H1 (cell line): ENCODE measurements at regions of chr12 and their contacts with region 1.

Region 1: GRCh38 chr12:111841750-111842555 is at the start of gene MAPKAPK5:
- DNase-seq: peak; percentile 86 to 98
- H3K4me3 ChIP-seq: peak within 1 kb of the TSS; percentile 75 to 94 (median 86)
- H3K27ac ChIP-seq: peak within 1 kb of the TSS; percentile 99
- H3K4me1 ChIP-seq: no peaks in the 10 kb centered on the region; a peak in 2 of 7 replicates
- H3K27me3 ChIP-seq: no peaks in the 10 kb centered on the region
- CTCF ChIP-seq: no peak
- EP300 ChIP-seq: peak in 1 of 2 experiments; percentile 38; a peak in 1 of 3 replicates
- POLR2A ChIP-seq: peak; percentile 79 to 82
- RAD21 ChIP-seq: no peak
- total RNA-seq, gene MAPKAPK5: 90.8 and 91.5 TPM in 2 replicates

Region 2: GRCh38 chr12:111424793-111425251 is 417.1 kb before region 1 on chr12:
- CTCF ChIA-PET with region 1: no interaction called
- POLR2A ChIA-PET with region 1: no interaction called
- DNase-seq: peak in 1 of 2 experiments; percentile 62
- H3K4me3 ChIP-seq: no peak overlapping the region
- H3K27ac ChIP-seq: no peak overlapping the region
- H3K4me1 ChIP-seq: peaks cover 2 to 21% (median 14%) of the 10 kb centered on the region in 4 experiments
- H3K27me3 ChIP-seq: no peaks in the 10 kb centered on the region; a peak in 1 of 7 replicates
- CTCF ChIP-seq: peak; percentile 68 to 83 (median 68)
- EP300 ChIP-seq: no peak
- POLR2A ChIP-seq: no peak
- RAD21 ChIP-seq: peak; percentile 74 to 79

Region 3: DNA sequence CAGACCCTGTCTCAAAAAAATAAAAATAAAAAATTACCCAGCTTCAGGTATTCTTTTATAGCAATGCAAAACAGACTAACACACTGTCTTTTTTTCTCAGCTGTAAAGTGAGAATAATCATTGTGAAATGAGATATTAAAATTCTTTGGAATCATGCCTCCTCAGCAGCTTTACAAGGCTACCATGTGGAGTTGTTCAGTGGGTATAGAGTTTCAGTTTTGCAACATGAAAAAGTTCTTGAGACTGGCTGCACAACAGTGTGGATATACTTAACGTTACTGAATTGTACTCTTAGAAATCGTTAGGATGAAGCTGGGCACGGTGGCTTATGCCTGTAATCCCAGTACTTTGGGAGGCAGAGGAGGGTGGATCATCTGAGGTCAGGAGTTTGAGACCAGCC is 15.6 kb before region 1 on chr12:
- CTCF ChIA-PET with region 1: interaction called, 6 read pairs
- POLR2A ChIA-PET with region 1: interaction called, 26 read pairs
- DNase-seq: no peak
- H3K4me3 ChIP-seq: no peak overlapping the region
- H3K27ac ChIP-seq: no peak overlapping the region
- H3K4me1 ChIP-seq: peaks cover 0 to 3% (median 0%) of the 10 kb centered on the region in 4 experiments; a peak in 1 of 7 replicates
- H3K27me3 ChIP-seq: no peaks in the 10 kb centered on the region
- CTCF ChIP-seq: no peak
- EP300 ChIP-seq: no peak
- POLR2A ChIP-seq: no peak
- RAD21 ChIP-seq: no peak

Region 4: GRCh38 chr12:111858778-111859177 is 16.8 kb after region 1 on chr12:
- CTCF ChIA-PET with region 1: interaction called, 10 read pairs
- POLR2A ChIA-PET with region 1: interaction called, 40 read pairs
- DNase-seq: no peak
- H3K4me3 ChIP-seq: no peak overlapping the region
- H3K27ac ChIP-seq: no peak overlapping the region
- H3K4me1 ChIP-seq: peaks cover 0 to 2% (median 0%) of the 10 kb centered on the region in 4 experiments; a peak in 1 of 7 replicates
- H3K27me3 ChIP-seq: no peaks in the 10 kb centered on the region
- CTCF ChIP-seq: no peak
- EP300 ChIP-seq: no peak
- POLR2A ChIP-seq: no peak
- RAD21 ChIP-seq: no peak

Region 5: DNA sequence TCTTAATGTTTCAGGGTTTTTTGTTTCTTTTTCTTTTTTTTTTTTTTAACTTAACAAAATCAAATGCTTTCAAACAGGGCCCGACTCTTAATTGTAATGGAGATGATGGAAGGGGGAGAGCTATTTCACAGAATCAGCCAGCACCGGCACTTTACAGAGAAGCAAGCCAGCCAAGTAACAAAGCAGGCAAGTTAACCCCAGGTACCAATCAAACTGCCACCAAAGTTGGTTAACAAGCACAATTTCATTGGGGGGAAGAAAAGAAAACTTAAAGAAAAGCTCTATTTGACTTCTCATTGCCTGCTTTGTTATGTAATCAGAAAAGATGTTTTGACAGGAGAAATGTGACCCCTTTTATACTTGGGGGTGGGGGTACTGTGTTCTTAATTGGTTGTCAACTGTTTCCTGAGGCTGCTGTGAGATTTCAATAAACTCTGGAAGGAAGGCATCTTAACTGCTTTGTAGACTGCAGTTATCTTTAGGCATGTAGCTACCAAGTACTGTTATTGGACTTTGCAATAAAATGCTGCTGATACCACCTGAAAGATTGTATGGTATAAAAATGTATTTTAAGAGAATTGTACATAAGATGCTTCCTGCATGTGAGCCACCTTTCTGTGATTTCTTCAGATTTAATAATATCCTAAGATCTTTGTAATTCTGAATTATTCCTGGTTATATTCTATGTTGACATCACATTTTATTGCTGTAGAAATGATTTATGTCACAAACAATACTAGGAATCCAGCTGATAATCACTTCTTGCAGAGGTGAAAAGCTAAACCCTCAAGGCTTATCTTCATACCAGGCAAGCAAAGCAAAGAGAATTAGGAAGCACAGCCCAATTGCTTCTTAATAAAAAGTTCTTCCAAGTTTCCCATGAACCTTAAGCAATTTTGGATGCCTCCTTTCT is 27.0 kb after region 1 on chr12:
- CTCF ChIA-PET with region 1: interaction called, 3 read pairs
- POLR2A ChIA-PET with region 1: interaction called, 32 read pairs
- DNase-seq: peak in 1 of 2 experiments; percentile 61
- H3K4me3 ChIP-seq: peak overlapping the region in 2 of 4 experiments; percentile 4 to 46; a peak in 3 of 8 replicates
- H3K27ac ChIP-seq: 0 out of 2 replicates have a peak overlapping the region, but pooled peaks have one; percentile 43
- H3K4me1 ChIP-seq: peaks cover 6 to 32% (median 19%) of the 10 kb centered on the region in 4 experiments
- H3K27me3 ChIP-seq: no peaks in the 10 kb centered on the region
- CTCF ChIP-seq: no peak
- EP300 ChIP-seq: no peak
- POLR2A ChIP-seq: no peak
- RAD21 ChIP-seq: no peak

Region 6: GRCh38 chr12:111927346-111927745 is 85.4 kb after region 1 on chr12:
- CTCF ChIA-PET with region 1: no interaction called
- POLR2A ChIA-PET with region 1: no interaction called
- DNase-seq: no peak
- H3K4me3 ChIP-seq: no peak overlapping the region
- H3K27ac ChIP-seq: no peak overlapping the region
- H3K4me1 ChIP-seq: no peaks in the 10 kb centered on the region
- H3K27me3 ChIP-seq: no peaks in the 10 kb centered on the region
- CTCF ChIP-seq: no peak
- EP300 ChIP-seq: no peak
- POLR2A ChIP-seq: no peak
- RAD21 ChIP-seq: no peak

Region 7: GRCh38 chr12:111953455-111953854 is 111.5 kb after region 1 on chr12:
- CTCF ChIA-PET with region 1: no interaction called
- POLR2A ChIA-PET with region 1: no interaction called
- DNase-seq: no peak
- H3K4me3 ChIP-seq: no peak overlapping the region
- H3K27ac ChIP-seq: no peak overlapping the region
- H3K4me1 ChIP-seq: no peaks in the 10 kb centered on the region
- H3K27me3 ChIP-seq: no peaks in the 10 kb centered on the region
- CTCF ChIP-seq: no peak
- EP300 ChIP-seq: no peak
- POLR2A ChIP-seq: no peak
- RAD21 ChIP-seq: no peak